ENCODE measurements at regions of chr11 and their contacts with region 1.

Region 1: GRCh38 chr11:28820296-28820989 is 712.3 kb downstream of the METTL15 start:
- DNase-seq: no peak
- H3K4me3 ChIP-seq: no peak overlapping the region
- H3K27ac ChIP-seq: no peak overlapping the region
- H3K4me1 ChIP-seq: peaks cover 7% of the 10 kb centered on the region
- H3K27me3 ChIP-seq: no peaks in the 10 kb centered on the region
- CTCF ChIP-seq: no peak
- POLR2A ChIP-seq: no peak

Region 2: DNA sequence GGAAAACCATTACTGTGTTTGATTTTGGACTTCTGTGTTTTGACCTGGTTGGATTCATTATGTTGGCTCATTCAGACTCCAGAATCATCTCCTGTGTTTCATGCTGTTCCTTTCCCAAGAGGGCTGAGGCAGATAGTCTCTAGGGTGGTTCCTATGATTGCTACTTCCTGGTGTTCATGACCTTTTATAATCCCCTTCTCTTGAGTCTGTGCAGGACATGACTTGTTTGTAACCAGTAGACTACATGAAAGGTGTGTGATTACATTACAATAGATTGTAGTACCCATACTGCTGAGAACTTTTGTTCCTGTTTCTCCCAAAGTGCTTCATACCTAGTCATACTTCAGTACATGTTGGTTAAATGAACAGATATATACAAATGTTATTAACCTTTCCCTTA is 11.7 kb before region 1 on chr11:
- CTCF ChIA-PET with region 1: interaction called, 11 read pairs
- POLR2A ChIA-PET with region 1: no interaction called
- dilution Hi-C with region 1: no loop called
- intact Hi-C with region 1: no loop called
- DNase-seq: no peak
- H3K4me3 ChIP-seq: no peak overlapping the region
- H3K27ac ChIP-seq: no peak overlapping the region
- H3K4me1 ChIP-seq: peaks cover 16% of the 10 kb centered on the region
- H3K27me3 ChIP-seq: no peaks in the 10 kb centered on the region
- CTCF ChIP-seq: no peak
- POLR2A ChIP-seq: no peak

Measured in endothelial cell of umbilical vein (primary cell).